ENCODE measurements at regions of chr7 and their contacts with region 1.

Region 1: GRCh38 chr7:66681491-66682349 is 53.0 kb downstream of the KCTD7 start:
- DNase-seq: peak; percentile 97
- ATAC-seq: peak; percentile 95
- H3K4me3 ChIP-seq: peak overlapping the region; percentile 62 to 99 (median 82)
- H3K4me3 Mint-ChIP-seq: peak overlapping the region; percentile 96
- H3K27ac ChIP-seq: peak overlapping the region; percentile 95 to 99
- H3K27ac Mint-ChIP-seq: peak overlapping the region; percentile 97
- H3K4me1 ChIP-seq: peaks cover 21 to 39% of the 10 kb centered on the region in 2 donors
- H3K4me1 Mint-ChIP-seq: peaks cover 35% of the 10 kb centered on the region
- H3K27me3 ChIP-seq: no peaks in the 10 kb centered on the region
- H3K27me3 Mint-ChIP-seq: no peaks in the 10 kb centered on the region
- CTCF ChIP-seq: no peak

Region 2: GRCh38 chr7:66591799-66592596 is 89.7 kb before region 1 on chr7:
- CTCF ChIA-PET with region 1: no interaction called
- POLR2A ChIA-PET with region 1: interaction called, 5 read pairs
- intact Hi-C with region 1: loop called (anchors 1 kb)
- DNase-seq: peak; percentile 90
- ATAC-seq: peak; percentile 98
- H3K4me3 ChIP-seq: peak overlapping the region; percentile 47 to 94 (median 81)
- H3K4me3 Mint-ChIP-seq: peak overlapping the region; percentile 100
- H3K27ac ChIP-seq: peak overlapping the region; percentile 42 to 87
- H3K27ac Mint-ChIP-seq: peak overlapping the region; percentile 99
- H3K4me1 ChIP-seq: peaks cover 13 to 27% of the 10 kb centered on the region in 2 donors
- H3K4me1 Mint-ChIP-seq: peaks cover 47% of the 10 kb centered on the region
- H3K27me3 ChIP-seq: no peaks in the 10 kb centered on the region
- H3K27me3 Mint-ChIP-seq: no peaks in the 10 kb centered on the region
- CTCF ChIP-seq: no peak

Region 3: DNA sequence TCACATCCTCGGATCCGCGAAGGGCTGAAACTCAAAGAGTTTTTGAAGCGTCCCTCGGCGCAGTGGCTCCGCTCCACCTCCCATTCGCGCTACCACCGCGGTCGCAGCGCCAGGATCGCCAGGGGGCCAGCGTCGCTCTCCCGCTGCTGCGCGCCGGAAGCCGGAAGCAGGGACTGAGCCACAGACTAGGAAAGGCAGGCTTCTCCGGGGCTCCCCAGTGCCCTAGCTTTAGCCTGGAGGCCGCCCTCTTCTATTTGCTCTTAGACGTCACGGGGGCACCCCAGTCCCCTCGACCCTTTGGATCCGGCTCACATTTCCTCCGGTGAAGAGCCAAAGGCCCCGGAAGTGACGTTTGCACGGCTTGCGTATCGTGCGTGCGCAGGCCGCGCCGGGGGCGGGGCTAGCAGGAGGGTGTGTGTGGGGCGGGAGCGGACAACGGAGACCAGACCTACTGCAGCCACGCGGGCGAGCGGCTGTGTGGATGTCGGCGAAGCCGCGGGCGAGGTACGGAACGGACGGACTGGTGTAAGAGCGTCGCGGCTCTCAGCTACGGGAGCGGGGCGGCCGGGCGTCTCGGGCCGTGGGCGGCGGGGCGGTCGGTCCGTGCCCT is 27.5 kb before region 1 on chr7:
- CTCF ChIA-PET with region 1: no interaction called
- POLR2A ChIA-PET with region 1: interaction called, 6 read pairs
- intact Hi-C with region 1: loop called (anchors 1 kb)
- DNase-seq: peak; percentile 99
- ATAC-seq: peak; percentile 92
- H3K4me3 ChIP-seq: peak overlapping the region; percentile 54 to 86 (median 83)
- H3K4me3 Mint-ChIP-seq: peak overlapping the region; percentile 98
- H3K27ac ChIP-seq: peak overlapping the region; percentile 82 to 98
- H3K27ac Mint-ChIP-seq: peak overlapping the region; percentile 99
- H3K4me1 ChIP-seq: peaks cover 9 to 16% of the 10 kb centered on the region in 2 donors
- H3K4me1 Mint-ChIP-seq: peaks cover 24% of the 10 kb centered on the region
- H3K27me3 ChIP-seq: no peaks in the 10 kb centered on the region
- H3K27me3 Mint-ChIP-seq: no peaks in the 10 kb centered on the region
- CTCF ChIP-seq: no peak

Measured in B cell (primary cell).